ENCODE measurements at regions of chr20 and their contacts with region 1.

Region 1: GRCh38 chr20:50509935-50510705 is at the start of gene PTPN1:
- DNase-seq: peak; percentile 99
- H3K4me3 ChIP-seq: peak within 1 kb of the TSS; percentile 88 to 100 (median 96)
- H3K4me3 Mint-ChIP-seq: peak within 1 kb of the TSS; percentile 95 to 96
- H3K27ac ChIP-seq: peak within 1 kb of the TSS; percentile 90 to 97
- H3K27ac Mint-ChIP-seq: peak within 1 kb of the TSS; percentile 87 to 99 (median 98)
- H3K4me1 ChIP-seq: peaks cover 54 to 55% of the 10 kb centered on the region in 2 donors
- H3K4me1 Mint-ChIP-seq: peaks cover 54% of the 10 kb centered on the region
- H3K27me3 ChIP-seq: no peaks in the 10 kb centered on the region
- H3K27me3 Mint-ChIP-seq: peaks cover 0 to 7% (median 3%) of the 10 kb centered on the region in 3 donors
- CTCF ChIP-seq: no peak
- polyA plus RNA-seq, gene PTPN1: 12.4 to 21.4 (median 19.1) TPM

Region 2: DNA sequence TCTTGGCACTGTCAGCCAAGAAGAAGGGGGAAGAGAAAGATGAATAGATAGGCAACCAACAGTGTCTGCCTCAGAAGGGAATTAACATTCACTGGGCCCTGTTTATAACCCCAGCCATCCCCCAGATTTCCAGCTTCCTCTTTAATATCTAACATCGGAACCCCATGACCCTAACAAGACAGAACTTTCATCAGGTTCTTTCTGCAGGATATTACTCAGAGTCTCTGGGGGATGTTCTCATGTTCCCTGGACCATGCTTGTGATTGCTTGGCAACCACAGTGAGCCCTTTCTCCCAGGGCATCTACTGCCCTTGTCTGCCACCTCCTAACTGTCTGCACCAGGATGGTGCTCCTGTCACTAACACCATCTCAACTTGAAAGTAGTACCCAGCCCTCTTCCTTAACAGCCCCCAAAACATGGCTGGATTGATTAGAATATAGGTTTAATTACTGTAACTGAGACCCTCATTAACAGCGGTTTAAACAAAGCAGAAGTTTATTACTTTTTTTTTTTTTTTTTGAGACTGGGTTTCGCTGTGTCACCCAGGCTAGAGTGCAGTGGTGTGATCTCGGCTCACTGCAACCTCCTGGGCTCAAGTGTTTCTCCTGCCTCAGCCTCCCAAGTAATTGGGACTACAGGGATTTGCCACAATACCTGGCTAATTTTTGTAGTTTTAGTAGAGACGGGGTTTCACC is 11.9 kb before region 1 on chr20:
- intact Hi-C with region 1: loop called in 1 of 2 experiments (anchors 1 kb)
- DNase-seq: peak; percentile 87 to 95 (median 90)
- H3K4me3 ChIP-seq: no peak overlapping the region
- H3K4me3 Mint-ChIP-seq: no peak overlapping the region
- H3K27ac ChIP-seq: peak overlapping the region; percentile 41 to 90
- H3K27ac Mint-ChIP-seq: peak overlapping the region; percentile 92 to 97 (median 97)
- H3K4me1 ChIP-seq: peaks cover 36 to 42% of the 10 kb centered on the region in 2 donors
- H3K4me1 Mint-ChIP-seq: peaks cover 44% of the 10 kb centered on the region
- H3K27me3 ChIP-seq: no peaks in the 10 kb centered on the region
- H3K27me3 Mint-ChIP-seq: peaks cover 0 to 3% (median 1%) of the 10 kb centered on the region in 3 donors
- CTCF ChIP-seq: no peak

Region 3: GRCh38 chr20:50546729-50547314 is 36.7 kb after region 1 on chr20:
- intact Hi-C with region 1: loop called in 1 of 2 experiments (anchors 5 kb)
- DNase-seq: peak; percentile 49 to 57 (median 52)
- H3K4me3 ChIP-seq: peak overlapping the region in 1 of 3 experiments; percentile 47
- H3K4me3 Mint-ChIP-seq: peak overlapping the region; percentile 29 to 76
- H3K27ac ChIP-seq: peak overlapping the region; percentile 31 to 74
- H3K27ac Mint-ChIP-seq: peak overlapping the region; percentile 81 to 93 (median 90)
- H3K4me1 ChIP-seq: peaks cover 44 to 59% of the 10 kb centered on the region in 2 donors
- H3K4me1 Mint-ChIP-seq: peaks cover 55% of the 10 kb centered on the region
- H3K27me3 ChIP-seq: no peaks in the 10 kb centered on the region
- H3K27me3 Mint-ChIP-seq: no peaks in the 10 kb centered on the region
- CTCF ChIP-seq: no peak

Region 4: GRCh38 chr20:50635667-50636503 is 125.8 kb after region 1 on chr20:
- intact Hi-C with region 1: no loop called
- DNase-seq: peak; percentile 25 to 43 (median 27)
- H3K4me3 ChIP-seq: no peak overlapping the region
- H3K4me3 Mint-ChIP-seq: peak overlapping the region in 1 of 2 donors; percentile 51
- H3K27ac ChIP-seq: no peak overlapping the region
- H3K27ac Mint-ChIP-seq: peak overlapping the region in 1 of 7 donors; percentile 26
- H3K4me1 ChIP-seq: no peaks in the 10 kb centered on the region
- H3K4me1 Mint-ChIP-seq: peaks cover 8% of the 10 kb centered on the region
- H3K27me3 ChIP-seq: no peaks in the 10 kb centered on the region
- H3K27me3 Mint-ChIP-seq: peaks cover 0 to 10% (median 4%) of the 10 kb centered on the region in 3 donors
- CTCF ChIP-seq: peak; percentile 94

Region 5: GRCh38 chr20:50762045-50762422 is 251.9 kb after region 1 on chr20:
- intact Hi-C with region 1: no loop called
- DNase-seq: no peak
- H3K4me3 ChIP-seq: no peak overlapping the region
- H3K4me3 Mint-ChIP-seq: no peak overlapping the region
- H3K27ac ChIP-seq: no peak overlapping the region
- H3K27ac Mint-ChIP-seq: no peak overlapping the region
- H3K4me1 ChIP-seq: no peaks in the 10 kb centered on the region
- H3K4me1 Mint-ChIP-seq: peaks cover 3% of the 10 kb centered on the region
- H3K27me3 ChIP-seq: no peaks in the 10 kb centered on the region
- H3K27me3 Mint-ChIP-seq: peaks cover 0 to 4% (median 2%) of the 10 kb centered on the region in 3 donors
- CTCF ChIP-seq: no peak

Measured in CD14-positive monocyte (primary cell).